ENCODE measurements at regions of chr6 and their contacts with region 1.

Region 1: GRCh38 chr6:145028144-145028818 is 707.0 kb downstream of the EPM2A start:
- DNase-seq: peak; percentile 86
- H3K4me3 ChIP-seq: no peak overlapping the region
- H3K27ac ChIP-seq: peak overlapping the region; percentile 61
- H3K4me1 ChIP-seq: peaks cover 51% of the 10 kb centered on the region
- H3K27me3 ChIP-seq: no peaks in the 10 kb centered on the region
- CTCF ChIP-seq: peak; percentile 80

Region 2: GRCh38 chr6:145137426-145137825 is 109.1 kb after region 1 on chr6:
- CTCF ChIA-PET with region 1: interaction called, 3 read pairs
- POLR2A ChIA-PET with region 1: no interaction called
- intact Hi-C with region 1: loop called (anchors 5 kb)
- DNase-seq: peak; percentile 67
- H3K4me3 ChIP-seq: no peak overlapping the region
- H3K27ac ChIP-seq: no peak overlapping the region
- H3K4me1 ChIP-seq: peaks cover 18% of the 10 kb centered on the region
- H3K27me3 ChIP-seq: no peaks in the 10 kb centered on the region
- CTCF ChIP-seq: peak; percentile 36; the same call in 1 of the 2 replicates

Region 3: GRCh38 chr6:145155873-145156782 is 127.8 kb after region 1 on chr6:
- CTCF ChIA-PET with region 1: no interaction called
- POLR2A ChIA-PET with region 1: no interaction called
- intact Hi-C with region 1: no loop called
- DNase-seq: no peak
- H3K4me3 ChIP-seq: no peak overlapping the region
- H3K27ac ChIP-seq: no peak overlapping the region
- H3K4me1 ChIP-seq: no peaks in the 10 kb centered on the region
- H3K27me3 ChIP-seq: no peaks in the 10 kb centered on the region
- CTCF ChIP-seq: no peak

Region 4: DNA sequence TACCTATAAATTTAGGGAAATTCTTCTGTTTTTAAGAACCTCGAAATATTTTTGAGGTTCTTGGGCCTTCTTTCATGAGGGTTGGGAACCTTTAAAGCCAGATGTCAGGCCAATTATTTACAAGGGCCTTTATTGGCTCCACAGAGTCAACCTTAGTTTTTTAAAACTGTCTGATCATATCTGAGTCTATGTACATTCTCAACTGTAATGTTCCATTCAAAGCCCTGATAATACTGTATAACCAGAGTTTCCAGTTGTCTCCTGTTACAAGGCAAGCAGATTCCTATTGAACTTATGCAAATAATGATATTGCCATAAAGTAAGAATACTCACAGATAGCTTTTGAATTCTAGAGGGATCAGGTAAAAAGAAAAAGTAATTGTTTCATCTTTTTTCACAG is 161.6 kb after region 1 on chr6:
- CTCF ChIA-PET with region 1: no interaction called
- POLR2A ChIA-PET with region 1: interaction called, 14 read pairs
- intact Hi-C with region 1: no loop called
- DNase-seq: no peak
- H3K4me3 ChIP-seq: no peak overlapping the region
- H3K27ac ChIP-seq: no peak overlapping the region
- H3K4me1 ChIP-seq: no peaks in the 10 kb centered on the region
- H3K27me3 ChIP-seq: no peaks in the 10 kb centered on the region
- CTCF ChIP-seq: no peak

Region 5: DNA sequence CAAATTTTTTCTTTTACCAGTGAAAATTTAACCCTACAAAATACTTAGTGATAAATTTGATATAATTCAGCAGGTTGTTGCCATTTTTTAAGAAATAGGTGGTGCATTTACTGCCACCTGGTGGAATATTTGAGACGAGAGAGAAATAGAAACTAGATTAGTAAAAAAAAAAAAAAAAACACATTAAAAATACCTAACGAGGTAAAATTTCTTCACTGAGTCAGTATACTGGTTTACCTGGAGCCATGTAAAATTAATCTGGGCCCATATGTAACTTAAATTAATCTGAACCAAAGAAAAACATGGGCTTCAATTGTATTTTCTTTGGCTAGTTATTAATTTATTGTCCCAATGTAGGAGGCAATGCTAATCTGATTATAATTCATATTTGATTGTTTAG is 186.3 kb after region 1 on chr6:
- CTCF ChIA-PET with region 1: no interaction called
- POLR2A ChIA-PET with region 1: no interaction called
- intact Hi-C with region 1: loop called (anchors 2 kb)
- DNase-seq: peak; percentile 72
- H3K4me3 ChIP-seq: no peak overlapping the region
- H3K27ac ChIP-seq: peak overlapping the region; percentile 60
- H3K4me1 ChIP-seq: peaks cover 17% of the 10 kb centered on the region
- H3K27me3 ChIP-seq: no peaks in the 10 kb centered on the region
- CTCF ChIP-seq: peak; percentile 78

Region 6: DNA sequence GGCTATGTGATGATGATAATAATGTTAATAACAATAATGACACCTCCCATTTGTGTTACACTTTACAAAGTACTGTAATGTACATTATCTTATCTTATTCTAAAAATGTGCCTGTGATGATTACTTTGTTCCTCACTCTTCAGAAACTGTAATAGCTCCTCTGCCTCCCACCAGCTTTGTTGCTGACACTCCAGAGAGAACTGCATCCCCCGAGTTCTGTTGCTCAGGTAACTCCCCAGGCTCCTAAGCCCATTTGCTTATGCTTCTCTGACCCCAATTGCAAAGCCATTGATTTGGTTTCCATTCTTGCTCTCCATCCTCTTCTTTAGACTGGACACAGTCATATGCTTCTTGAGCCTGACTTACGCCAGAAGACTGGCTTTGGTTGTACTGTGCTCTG is 387.3 kb after region 1 on chr6:
- CTCF ChIA-PET with region 1: no interaction called
- POLR2A ChIA-PET with region 1: no interaction called
- intact Hi-C with region 1: no loop called
- DNase-seq: no peak
- H3K4me3 ChIP-seq: no peak overlapping the region
- H3K27ac ChIP-seq: no peak overlapping the region
- H3K4me1 ChIP-seq: no peaks in the 10 kb centered on the region
- H3K27me3 ChIP-seq: no peaks in the 10 kb centered on the region
- CTCF ChIP-seq: no peak